ENCODE measurements at regions of chr14 and their contacts with region 1.

Region 1: GRCh38 chr14:41986726-41987125 is 380.1 kb downstream of the LRFN5 start:
- DNase-seq: no peak
- H3K4me3 ChIP-seq: no peak overlapping the region
- H3K27ac ChIP-seq: no peak overlapping the region
- H3K4me1 ChIP-seq: no peaks in the 10 kb centered on the region
- H3K27me3 ChIP-seq: no peaks in the 10 kb centered on the region
- CTCF ChIP-seq: no peak

Region 2: GRCh38 chr14:42002141-42002540 is 15.4 kb after region 1 on chr14:
- intact Hi-C with region 1: loop called (anchors 2 kb)
- DNase-seq: no peak
- H3K4me3 ChIP-seq: no peak overlapping the region
- H3K27ac ChIP-seq: no peak overlapping the region
- H3K4me1 ChIP-seq: no peaks in the 10 kb centered on the region
- H3K27me3 ChIP-seq: no peaks in the 10 kb centered on the region
- CTCF ChIP-seq: no peak